ENCODE measurements at regions of chr12 and their contacts with region 1.

Region 1: GRCh38 chr12:76820888-76821482 is 57.1 kb downstream of the ZDHHC17 start:
- DNase-seq: peak; percentile 3
- H3K4me3 ChIP-seq: no peak overlapping the region
- H3K27ac ChIP-seq: no peak overlapping the region
- H3K27me3 ChIP-seq: no peaks in the 10 kb centered on the region
- CTCF ChIP-seq: peak; percentile 77

Region 2: GRCh38 chr12:76621582-76622024 is 199.4 kb before region 1 on chr12:
- CTCF ChIA-PET with region 1: interaction called, 28 read pairs
- POLR2A ChIA-PET with region 1: no interaction called
- DNase-seq: peak; percentile 36
- H3K4me3 ChIP-seq: no peak overlapping the region
- H3K27ac ChIP-seq: no peak overlapping the region
- H3K27me3 ChIP-seq: no peaks in the 10 kb centered on the region
- CTCF ChIP-seq: peak; percentile 91

Region 3: GRCh38 chr12:76810671-76811419 is 10.1 kb before region 1 on chr12:
- CTCF ChIA-PET with region 1: interaction called, 10 read pairs
- POLR2A ChIA-PET with region 1: no interaction called
- DNase-seq: no peak
- H3K4me3 ChIP-seq: no peak overlapping the region
- H3K27ac ChIP-seq: no peak overlapping the region
- H3K27me3 ChIP-seq: no peaks in the 10 kb centered on the region
- CTCF ChIP-seq: no peak